ENCODE measurements at regions of chr17 and their contacts with region 1.

Region 1: GRCh38 chr17:34542700-34543336 is 36.6 kb upstream of the TMEM132E start:
- DNase-seq: peak; percentile 30 to 40
- ATAC-seq: peak in 1 of 2 experiments; percentile 83; a peak in 3 of 6 replicates
- H3K4me3 ChIP-seq: no peak overlapping the region
- H3K27ac ChIP-seq: no peak overlapping the region
- H3K4me1 ChIP-seq: no peaks in the 10 kb centered on the region
- CTCF ChIP-seq: peak; percentile 94
- EP300 ChIP-seq: no peak
- POLR2A ChIP-seq: no peak
- RAD21 ChIP-seq: peak; percentile 86 to 89

Region 2: DNA sequence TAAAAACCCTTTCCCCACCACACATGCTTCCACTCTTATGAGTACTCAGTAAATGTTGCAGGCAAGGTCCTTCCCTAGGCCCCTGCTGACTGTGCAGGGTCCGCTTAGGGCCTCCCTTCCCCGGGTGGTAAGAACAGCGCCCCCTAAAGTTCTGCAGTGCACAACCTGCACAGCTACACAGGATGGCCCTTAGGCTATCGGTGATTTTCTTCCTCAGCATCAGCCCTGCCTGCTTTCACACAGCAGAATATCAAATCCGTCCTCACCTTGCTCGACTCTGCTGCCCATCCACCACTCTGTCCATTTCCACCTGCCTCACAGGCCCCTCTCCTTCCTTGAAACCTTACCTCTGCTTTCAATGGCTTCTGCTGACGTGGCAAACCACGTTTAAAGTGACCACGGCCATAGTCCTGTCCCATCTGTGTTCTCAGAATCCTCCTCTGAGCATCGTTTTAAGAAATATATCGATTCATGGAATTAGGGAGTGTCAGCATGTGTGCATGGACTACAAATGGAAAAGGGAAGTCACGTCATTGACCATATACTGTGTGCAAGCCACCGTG is 14.8 kb before region 1 on chr17:
- CTCF ChIA-PET with region 1: interaction called, 79 read pairs
- POLR2A ChIA-PET with region 1: interaction called, 3 read pairs
- DNase-seq: peak in 1 of 2 experiments; percentile 14
- ATAC-seq: peak; percentile 37 to 80; a peak in 4 of 6 replicates
- H3K4me3 ChIP-seq: no peak overlapping the region
- H3K27ac ChIP-seq: no peak overlapping the region
- H3K4me1 ChIP-seq: no peaks in the 10 kb centered on the region
- CTCF ChIP-seq: no peak
- EP300 ChIP-seq: no peak
- POLR2A ChIP-seq: no peak
- RAD21 ChIP-seq: no peak

Measured in A549 (cell line).